ENCODE measurements at regions of chr13 and their contacts with region 1.

Region 1: GRCh38 chr13:110915057-110915873 is at the start of gene ANKRD10:
- DNase-seq: peak; percentile 99
- CTCF ChIP-seq: peak; percentile 83

Region 2: DNA sequence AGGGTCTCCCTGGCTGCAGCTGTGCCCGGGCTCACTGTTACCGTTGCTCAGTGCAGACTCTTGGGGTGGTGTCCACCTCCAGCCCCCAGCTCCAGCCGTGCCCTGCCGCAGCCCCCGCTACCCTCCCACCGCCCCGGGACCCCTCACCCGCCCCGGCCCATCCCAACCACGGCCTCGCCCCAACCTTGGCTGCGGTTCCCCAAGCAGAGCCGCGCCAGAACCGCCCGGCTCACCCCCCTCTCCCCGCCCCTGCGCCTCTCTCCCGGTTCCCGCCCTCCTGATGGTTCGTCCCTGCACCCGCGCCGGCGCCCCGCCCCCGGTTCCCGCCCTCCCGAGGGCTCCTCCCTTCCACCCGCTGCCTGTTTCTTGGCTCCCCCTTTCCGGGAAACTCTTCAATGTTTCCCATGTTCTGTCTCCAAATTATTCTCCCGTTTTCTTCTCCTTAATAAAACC is 40.7 kb before region 1 on chr13:
- CTCF ChIA-PET with region 1: no interaction called
- POLR2A ChIA-PET with region 1: no interaction called
- DNase-seq: peak; percentile 80
- CTCF ChIP-seq: no peak

Region 3: DNA sequence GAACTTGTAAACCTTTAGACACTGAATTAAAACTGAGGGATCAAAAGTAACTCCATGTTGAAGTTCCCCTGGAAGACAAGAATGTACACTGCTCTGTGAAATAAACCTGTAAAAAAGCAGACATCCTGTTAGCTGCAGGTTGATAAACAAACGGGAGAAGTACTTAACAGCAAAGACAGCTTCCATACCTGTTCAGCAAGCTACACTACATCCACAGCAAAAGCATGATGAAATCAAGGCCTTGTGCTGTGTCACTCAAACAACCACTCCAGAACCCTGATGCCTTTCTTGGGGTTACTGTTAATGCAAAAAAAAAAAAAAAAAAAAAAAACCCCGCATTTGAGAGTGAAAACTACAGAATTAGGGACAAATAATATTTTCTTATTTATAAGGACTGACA is 21.2 kb before region 1 on chr13:
- CTCF ChIA-PET with region 1: interaction called, 3 read pairs
- POLR2A ChIA-PET with region 1: interaction called, 10 read pairs
- DNase-seq: no peak
- CTCF ChIP-seq: no peak

Region 4: DNA sequence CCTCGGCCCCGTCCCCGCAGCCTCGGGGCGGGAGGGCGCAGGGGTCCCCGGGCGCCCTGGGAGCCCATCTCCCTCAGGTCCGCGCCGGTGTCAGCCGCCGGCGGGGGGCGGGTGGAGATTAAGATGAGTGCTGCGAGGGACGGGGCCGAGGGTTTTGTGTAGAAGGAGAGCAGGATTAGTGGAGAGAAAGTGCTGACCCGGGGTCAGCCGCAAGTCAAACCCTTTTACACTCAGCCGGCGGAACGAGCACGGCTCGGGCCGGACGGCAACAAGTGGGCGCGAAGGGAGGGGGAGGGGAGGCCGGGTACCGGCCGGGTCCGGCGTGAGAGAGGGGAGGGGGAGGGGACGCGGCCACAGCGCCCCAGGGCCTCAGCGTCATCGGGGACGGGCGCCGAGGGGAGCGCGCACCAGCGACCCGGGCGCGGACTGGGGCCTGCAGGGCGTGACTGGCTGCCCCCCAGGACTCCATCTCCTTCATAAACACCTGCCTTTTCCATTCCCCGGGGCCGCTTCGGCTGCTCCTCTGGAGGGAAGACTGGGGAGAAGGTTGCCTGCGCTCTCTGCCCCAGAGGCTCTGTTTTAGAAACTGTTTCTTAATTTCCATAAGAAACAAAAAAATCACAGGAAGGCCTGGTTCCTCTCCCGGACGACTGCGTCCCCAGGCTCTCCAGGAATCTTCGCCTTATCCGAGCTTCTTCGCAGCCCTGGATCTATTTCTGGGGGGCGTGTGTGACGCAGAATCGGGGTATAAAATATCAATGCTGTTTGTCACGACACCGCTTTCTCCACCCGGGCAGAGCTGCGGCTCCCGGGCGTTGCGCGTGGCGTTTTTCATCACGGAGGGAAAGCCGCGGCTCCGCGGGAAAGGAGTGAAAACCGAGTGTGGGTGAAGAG is 1158.2 kb after region 1 on chr13:
- CTCF ChIA-PET with region 1: no interaction called
- POLR2A ChIA-PET with region 1: no interaction called
- DNase-seq: no peak
- CTCF ChIP-seq: no peak